ENCODE measurements at regions of chr16 and their contacts with region 1.

Region 1: DNA sequence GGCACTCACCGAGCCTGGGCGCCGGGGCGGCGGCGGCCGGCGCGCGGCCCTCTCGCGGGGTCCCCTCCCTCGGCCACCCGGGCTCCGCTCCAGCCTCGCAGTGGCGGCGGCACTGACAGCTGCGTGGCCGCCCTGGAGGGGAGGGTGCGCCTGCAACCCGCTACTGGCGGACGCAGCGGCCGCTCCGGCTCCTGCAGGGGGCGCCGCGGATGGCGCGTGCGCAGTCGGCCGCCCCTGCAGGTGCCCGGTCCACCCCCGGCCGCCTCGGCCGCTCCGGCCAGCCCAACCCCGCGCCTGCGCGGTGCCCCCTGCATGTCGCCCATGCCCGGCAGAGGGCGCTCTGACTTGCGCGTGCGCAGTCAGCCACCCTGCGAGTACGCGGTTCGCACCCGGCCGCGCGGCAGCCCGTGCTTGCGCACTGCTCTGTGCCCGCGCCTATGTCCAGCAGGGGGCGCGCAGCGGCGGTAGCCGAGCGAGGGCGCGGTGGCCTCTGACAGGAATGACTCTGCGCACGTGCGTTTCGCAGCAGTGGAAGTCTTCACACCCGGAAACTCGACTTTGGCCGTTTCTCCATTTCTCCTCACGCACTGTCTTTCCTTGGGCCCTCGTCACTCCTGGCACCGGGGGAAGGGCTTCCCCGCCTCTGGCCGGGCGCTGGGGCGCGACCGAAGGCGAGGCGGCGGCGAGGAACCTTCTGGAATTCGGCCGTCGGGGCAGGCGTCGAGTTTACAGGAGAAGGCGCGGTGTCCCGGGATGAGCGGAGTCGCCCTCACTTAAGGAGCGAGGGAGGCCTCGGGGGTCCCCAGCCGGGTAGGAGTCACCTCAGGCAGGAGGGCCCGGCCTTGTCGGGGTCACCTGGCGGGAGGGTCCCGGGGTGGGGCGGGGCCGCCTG is at the start of gene ABCA3:
- DNase-seq: peak; percentile 59 to 95
- H3K4me3 ChIP-seq: peak within 1 kb of the TSS; percentile 62 to 89
- H3K27ac ChIP-seq: peak within 1 kb of the TSS in 1 of 2 donors; percentile 32
- H3K4me1 ChIP-seq: peaks cover 0 to 11% of the 10 kb centered on the region in 2 donors
- H3K27me3 ChIP-seq: no peaks in the 10 kb centered on the region
- CTCF ChIP-seq: peak; percentile 99 to 100 (median 100)
- total RNA-seq, gene ABCA3: 25.9 TPM

Region 2: GRCh38 chr16:2278272-2278608 is 62.6 kb before region 1 on chr16:
- intact Hi-C with region 1: loop called (anchors 10 kb)
- DNase-seq: no peak
- H3K4me3 ChIP-seq: no peak overlapping the region
- H3K27ac ChIP-seq: no peak overlapping the region
- H3K4me1 ChIP-seq: no peaks in the 10 kb centered on the region
- H3K27me3 ChIP-seq: no peaks in the 10 kb centered on the region
- CTCF ChIP-seq: no peak

Region 3: GRCh38 chr16:2500918-2501750 is 160.3 kb after region 1 on chr16:
- intact Hi-C with region 1: loop called (anchors 1 kb)
- DNase-seq: peak in 1 of 2 donors; percentile 89
- H3K4me3 ChIP-seq: peak overlapping the region in 1 of 2 donors; percentile 38
- H3K27ac ChIP-seq: no peak overlapping the region
- H3K4me1 ChIP-seq: peaks cover 12 to 30% of the 10 kb centered on the region in 2 donors
- H3K27me3 ChIP-seq: no peaks in the 10 kb centered on the region
- CTCF ChIP-seq: peak; percentile 94 to 99 (median 98)

Region 4: DNA sequence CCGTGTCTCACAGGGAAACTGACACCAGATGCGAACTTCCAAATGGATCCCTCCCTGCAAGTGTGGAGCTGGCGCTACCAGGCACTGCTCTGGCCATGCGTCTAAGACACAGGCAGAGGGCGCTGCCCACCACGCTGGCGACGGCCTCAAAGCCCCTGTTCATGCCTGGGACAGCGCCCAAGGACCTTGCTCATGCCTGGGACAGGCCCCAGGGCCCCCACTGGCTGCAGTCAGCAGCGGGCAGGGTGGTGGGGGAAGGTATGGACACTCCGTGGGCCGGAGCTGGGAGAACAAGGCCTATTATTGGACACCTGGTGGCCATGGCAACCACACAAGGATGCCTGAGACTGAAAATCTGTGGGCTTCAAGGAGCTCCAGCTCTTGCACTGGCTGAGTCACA is 498.1 kb after region 1 on chr16:
- intact Hi-C with region 1: no loop called
- DNase-seq: no peak
- H3K4me3 ChIP-seq: no peak overlapping the region
- H3K27ac ChIP-seq: no peak overlapping the region
- H3K4me1 ChIP-seq: peaks cover 0 to 11% of the 10 kb centered on the region in 2 donors
- H3K27me3 ChIP-seq: no peaks in the 10 kb centered on the region
- CTCF ChIP-seq: peak; percentile 34 to 63 (median 56)

Measured in ascending aorta (tissue), 2 donors.